SK-N-SH (cell line): ENCODE measurements at regions of chr5 and their contacts with region 1.

Region 1: DNA sequence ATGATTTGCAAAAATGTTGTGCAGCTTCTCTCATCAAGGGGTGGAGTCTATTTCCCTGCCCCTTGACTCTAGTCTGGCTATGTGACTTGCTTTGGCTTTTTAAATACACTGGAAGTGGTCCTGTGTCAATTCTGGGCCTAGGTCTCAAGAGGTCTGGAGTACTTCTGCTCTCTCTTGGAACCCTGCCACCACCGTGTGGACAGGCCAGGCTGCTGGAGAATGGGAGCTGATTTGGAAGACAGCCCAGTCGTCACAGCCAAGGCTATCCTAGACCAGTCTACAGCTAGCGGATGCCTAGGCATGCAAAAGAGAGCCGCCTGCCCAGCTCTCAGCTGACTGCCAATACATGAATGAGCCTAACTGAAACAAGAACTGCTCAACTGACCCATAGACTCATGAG is 56.7 kb upstream of the CLINT1 start:
- DNase-seq: peak; percentile 72
- H3K4me3 ChIP-seq: no peak overlapping the region
- H3K27ac ChIP-seq: peak overlapping the region in 1 of 2 experiments; percentile 7; a peak in 1 of 4 replicates
- H3K4me1 ChIP-seq: peaks cover 0 to 25% of the 10 kb centered on the region in 2 experiments; a peak in 2 of 4 replicates
- H3K27me3 ChIP-seq: no peaks in the 10 kb centered on the region
- CTCF ChIP-seq: no peak
- EP300 ChIP-seq: peak in 1 of 2 experiments; percentile 62; a peak in 2 of 4 replicates
- RAD21 ChIP-seq: peak; percentile 63

Region 2: DNA sequence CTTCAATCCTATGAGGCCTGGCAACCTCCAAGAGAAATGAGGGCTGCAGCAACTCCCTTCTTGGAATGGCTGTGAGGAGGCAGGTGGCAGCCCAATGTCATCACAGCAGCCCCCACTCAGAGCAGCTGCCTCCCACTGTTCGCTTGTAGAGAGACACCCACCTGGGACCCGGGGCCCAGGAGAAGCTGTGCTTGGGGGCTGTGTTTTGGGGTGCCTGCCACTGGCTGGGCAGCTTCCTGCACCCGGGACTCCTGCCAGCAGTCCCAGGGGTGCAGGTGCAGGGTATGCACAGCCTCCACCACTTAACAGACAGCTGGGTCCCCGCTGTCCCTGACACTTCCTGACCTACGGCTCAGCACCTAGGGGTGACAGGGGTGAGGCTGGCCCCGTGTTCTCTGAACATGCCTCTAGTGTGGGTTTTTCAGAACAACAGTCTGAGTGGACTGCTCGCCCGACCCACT is 429.4 kb before region 1 on chr5:
- CTCF ChIA-PET with region 1: no interaction called
- POLR2A ChIA-PET with region 1: no interaction called
- DNase-seq: no peak
- H3K4me3 ChIP-seq: no peak overlapping the region
- H3K27ac ChIP-seq: no peak overlapping the region
- H3K4me1 ChIP-seq: no peaks in the 10 kb centered on the region
- H3K27me3 ChIP-seq: no peaks in the 10 kb centered on the region
- CTCF ChIP-seq: no peak
- EP300 ChIP-seq: no peak
- RAD21 ChIP-seq: no peak

Region 3: DNA sequence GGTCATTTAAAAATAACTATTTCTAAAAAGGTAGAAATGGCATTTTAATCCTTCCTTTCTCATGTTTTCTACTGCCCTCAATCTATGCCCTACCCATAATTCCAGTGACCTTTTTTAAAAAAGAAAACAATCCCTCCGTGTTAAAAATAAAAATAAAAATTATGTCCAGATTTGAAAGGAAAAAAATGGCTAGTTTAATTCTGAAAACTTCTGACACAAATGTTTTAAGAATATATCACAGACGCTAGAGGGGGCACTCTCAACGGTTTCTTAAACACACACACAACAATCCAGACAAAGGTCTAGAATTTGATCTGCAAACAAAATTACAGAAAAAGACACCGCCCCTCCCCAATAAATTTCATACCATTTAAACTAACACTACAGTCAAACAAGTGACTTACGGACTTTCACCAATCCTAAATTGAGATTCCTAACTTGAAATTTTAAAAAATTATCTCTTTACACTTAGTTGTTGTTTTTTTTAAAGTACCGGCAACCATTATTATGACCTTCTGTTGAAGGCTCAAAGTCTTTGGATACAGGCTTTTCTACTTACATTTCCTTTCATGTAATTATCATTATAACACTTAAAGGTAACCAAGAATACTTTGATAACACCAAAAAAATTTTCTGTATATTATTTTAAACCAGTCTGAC is 94.9 kb before region 1 on chr5:
- CTCF ChIA-PET with region 1: interaction called, 12 read pairs
- POLR2A ChIA-PET with region 1: no interaction called
- DNase-seq: peak; percentile 19
- H3K4me3 ChIP-seq: no peak overlapping the region
- H3K27ac ChIP-seq: no peak overlapping the region; a peak in 1 of 4 replicates
- H3K4me1 ChIP-seq: peaks cover 0 to 6% of the 10 kb centered on the region in 2 experiments; a peak in 2 of 4 replicates
- H3K27me3 ChIP-seq: no peaks in the 10 kb centered on the region
- CTCF ChIP-seq: peak; percentile 78
- EP300 ChIP-seq: no peak
- RAD21 ChIP-seq: peak; percentile 60